MCF 10A (cell line): ENCODE measurements at regions of chr1 and their contacts with region 1.

Region 1: GRCh38 chr1:6784560-6785317 is 515 bp upstream of the CAMTA1 start:
- DNase-seq: peak; percentile 100
- H3K4me3 Mint-ChIP-seq: peak overlapping the region; percentile 86
- H3K27ac Mint-ChIP-seq: peak overlapping the region; percentile 94
- H3K4me1 Mint-ChIP-seq: peaks cover 27% of the 10 kb centered on the region
- H3K27me3 Mint-ChIP-seq: no peaks in the 10 kb centered on the region
- CTCF ChIP-seq: no peak

Region 2: DNA sequence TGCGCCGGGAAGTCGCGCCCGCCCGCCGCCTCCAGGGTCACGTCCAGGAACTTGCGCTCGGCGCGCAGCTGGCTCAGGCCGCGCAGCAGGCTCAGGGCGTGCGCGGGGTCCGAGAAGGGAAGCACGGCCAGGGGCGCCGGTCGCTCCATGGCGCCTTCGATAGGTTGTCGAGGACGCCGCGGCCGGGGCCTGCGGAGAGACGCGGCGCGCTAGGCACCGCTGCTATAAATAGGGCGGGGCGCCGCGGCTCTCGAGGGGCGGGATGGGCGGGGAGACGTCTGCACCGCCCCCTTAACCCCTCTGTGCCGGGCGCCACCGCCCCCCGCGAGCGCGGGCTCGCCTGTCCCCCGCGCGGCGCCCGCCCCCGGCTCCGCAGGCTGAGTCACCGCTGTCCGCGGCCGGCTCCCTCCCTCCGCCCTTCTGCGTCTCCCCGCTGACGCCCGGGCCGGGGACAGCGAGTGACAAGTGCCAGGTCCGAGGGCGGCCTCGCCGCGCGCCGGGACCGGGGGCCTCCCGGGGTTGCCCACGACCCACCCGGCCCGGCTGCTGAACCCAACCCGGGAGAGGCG is 182.0 kb before region 1 on chr1 and contains the start of gene KLHL21:
- CTCF ChIA-PET with region 1: no interaction called
- POLR2A ChIA-PET with region 1: interaction called, 19 read pairs
- intact Hi-C with region 1: no loop called
- DNase-seq: peak; percentile 82
- H3K4me3 Mint-ChIP-seq: peak within 1 kb of the TSS; percentile 99
- H3K27ac Mint-ChIP-seq: peak within 1 kb of the TSS; percentile 99
- H3K4me1 Mint-ChIP-seq: peaks cover 17% of the 10 kb centered on the region
- H3K27me3 Mint-ChIP-seq: no peaks in the 10 kb centered on the region
- CTCF ChIP-seq: no peak
- total RNA-seq, gene KLHL21: 14.0 and 19.5 TPM in 2 replicates

Region 3: GRCh38 chr1:6727535-6727934 is 57.2 kb before region 1 on chr1:
- CTCF ChIA-PET with region 1: interaction called, 8 read pairs
- POLR2A ChIA-PET with region 1: interaction called, 23 read pairs
- intact Hi-C with region 1: no loop called
- DNase-seq: peak; percentile 71
- H3K4me3 Mint-ChIP-seq: no peak overlapping the region
- H3K27ac Mint-ChIP-seq: no peak overlapping the region
- H3K4me1 Mint-ChIP-seq: peaks cover 12% of the 10 kb centered on the region
- H3K27me3 Mint-ChIP-seq: no peaks in the 10 kb centered on the region
- CTCF ChIP-seq: peak; percentile 88

Region 4: GRCh38 chr1:6743189-6744101 is 41.3 kb before region 1 on chr1:
- CTCF ChIA-PET with region 1: no interaction called
- POLR2A ChIA-PET with region 1: interaction called, 32 read pairs
- intact Hi-C with region 1: no loop called
- DNase-seq: peak; percentile 91
- H3K4me3 Mint-ChIP-seq: peak overlapping the region; percentile 52
- H3K27ac Mint-ChIP-seq: peak overlapping the region; percentile 55
- H3K4me1 Mint-ChIP-seq: peaks cover 12% of the 10 kb centered on the region
- H3K27me3 Mint-ChIP-seq: peaks cover 11% of the 10 kb centered on the region
- CTCF ChIP-seq: no peak

Region 5: DNA sequence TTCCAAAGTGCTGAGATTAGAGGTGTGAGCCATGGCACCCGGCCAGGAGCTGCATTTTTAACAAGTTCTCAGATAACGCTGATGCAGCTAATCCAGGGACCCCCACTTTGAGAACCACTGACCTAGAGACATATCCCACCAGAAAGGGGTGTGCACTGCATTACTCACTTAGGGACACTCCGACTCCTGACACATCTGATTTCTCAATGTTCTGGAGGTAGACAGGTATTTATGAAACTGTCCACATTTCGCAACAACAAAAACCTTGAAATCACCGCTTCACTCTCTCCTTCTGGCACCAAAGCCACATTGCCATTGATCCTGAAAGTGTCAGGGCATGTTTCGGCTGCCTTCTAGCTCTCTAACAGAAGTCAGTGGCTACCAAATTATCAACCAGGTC is 22.7 kb before region 1 on chr1:
- CTCF ChIA-PET with region 1: interaction called, 4 read pairs
- POLR2A ChIA-PET with region 1: interaction called, 56 read pairs
- intact Hi-C with region 1: no loop called
- DNase-seq: peak; percentile 91
- H3K4me3 Mint-ChIP-seq: peak overlapping the region; percentile 43
- H3K27ac Mint-ChIP-seq: peak overlapping the region; percentile 72
- H3K4me1 Mint-ChIP-seq: peaks cover 14% of the 10 kb centered on the region
- H3K27me3 Mint-ChIP-seq: no peaks in the 10 kb centered on the region
- CTCF ChIP-seq: no peak

Region 6: DNA sequence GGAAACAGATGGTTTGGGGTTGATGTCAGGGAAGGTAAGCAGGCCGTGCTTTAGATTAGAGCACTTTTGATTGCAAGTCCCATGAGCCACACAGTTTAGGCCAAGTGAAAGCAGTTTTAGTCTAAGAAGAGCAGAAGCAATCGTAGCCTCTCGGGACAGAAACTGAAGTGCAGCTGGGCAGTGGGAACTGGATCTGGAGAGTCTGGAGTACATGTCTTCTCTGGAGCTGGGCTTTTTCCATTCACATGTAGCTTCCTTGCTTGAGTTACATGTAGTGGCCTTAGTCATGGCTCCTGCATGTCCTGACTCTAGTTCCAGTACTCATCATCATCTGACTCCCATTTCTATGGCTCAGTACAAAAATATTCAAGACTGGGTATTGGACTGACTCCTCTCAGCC is 17.2 kb after region 1 on chr1:
- CTCF ChIA-PET with region 1: no interaction called
- POLR2A ChIA-PET with region 1: interaction called, 15 read pairs
- intact Hi-C with region 1: no loop called
- DNase-seq: no peak
- H3K4me3 Mint-ChIP-seq: no peak overlapping the region
- H3K27ac Mint-ChIP-seq: peak overlapping the region; percentile 90
- H3K4me1 Mint-ChIP-seq: peaks cover 18% of the 10 kb centered on the region
- H3K27me3 Mint-ChIP-seq: no peaks in the 10 kb centered on the region
- CTCF ChIP-seq: no peak

Region 7: DNA sequence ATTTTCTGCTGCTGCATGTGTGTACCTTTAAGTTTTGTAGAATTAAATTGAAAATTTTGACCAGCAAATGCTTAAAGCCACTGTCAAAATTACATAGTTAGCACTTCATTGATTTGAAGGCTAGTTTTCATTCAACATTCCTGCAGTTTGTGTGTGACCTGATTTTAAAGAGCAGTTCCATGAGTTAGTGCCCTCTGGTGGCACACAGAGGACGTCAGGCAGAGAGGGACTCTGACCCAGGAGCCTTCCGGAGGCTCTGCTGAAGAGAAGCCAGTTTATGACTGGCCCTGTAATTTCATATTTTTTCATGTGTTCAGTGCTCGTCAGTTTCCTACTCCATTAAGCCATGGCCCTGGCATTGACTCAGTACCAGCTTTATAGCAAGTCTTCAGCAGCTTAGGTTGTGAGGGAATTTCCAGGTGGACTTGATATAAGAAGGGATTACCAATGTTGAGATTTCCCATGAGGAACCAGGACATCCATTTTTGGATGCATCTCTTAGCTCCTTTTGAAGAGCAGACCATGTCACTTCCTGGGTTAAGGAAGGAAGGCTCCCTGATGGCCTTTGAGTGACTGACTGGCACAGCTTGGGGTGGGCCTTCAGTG is 105.2 kb after region 1 on chr1:
- CTCF ChIA-PET with region 1: interaction called, 9 read pairs
- POLR2A ChIA-PET with region 1: interaction called, 17 read pairs
- intact Hi-C with region 1: no loop called
- DNase-seq: peak; percentile 70
- H3K4me3 Mint-ChIP-seq: no peak overlapping the region
- H3K27ac Mint-ChIP-seq: peak overlapping the region; percentile 35
- H3K4me1 Mint-ChIP-seq: peaks cover 18% of the 10 kb centered on the region
- H3K27me3 Mint-ChIP-seq: no peaks in the 10 kb centered on the region
- CTCF ChIP-seq: peak; percentile 71